Endothelial cell of umbilical vein (primary cell): ENCODE measurements at regions of chr2 and their contacts with region 1.

Region 1: GRCh38 chr2:102240640-102241370 is 54.0 kb downstream of the IL1RL2 start:
- DNase-seq: peak; percentile 94
- H3K4me3 ChIP-seq: no peak overlapping the region
- H3K27ac ChIP-seq: peak overlapping the region; percentile 36
- H3K4me1 ChIP-seq: peaks cover 12% of the 10 kb centered on the region
- H3K27me3 ChIP-seq: no peaks in the 10 kb centered on the region
- CTCF ChIP-seq: peak; percentile 97
- POLR2A ChIP-seq: no peak

Region 2: GRCh38 chr2:101733257-101733993 is 507.4 kb before region 1 on chr2:
- CTCF ChIA-PET with region 1: no interaction called
- POLR2A ChIA-PET with region 1: no interaction called
- dilution Hi-C with region 1: no loop called
- intact Hi-C with region 1: no loop called
- DNase-seq: no peak
- H3K4me3 ChIP-seq: no peak overlapping the region
- H3K27ac ChIP-seq: no peak overlapping the region
- H3K4me1 ChIP-seq: peaks cover 39% of the 10 kb centered on the region
- H3K27me3 ChIP-seq: no peaks in the 10 kb centered on the region
- CTCF ChIP-seq: no peak
- POLR2A ChIP-seq: no peak

Region 3: GRCh38 chr2:101883863-101884262 is 356.9 kb before region 1 on chr2:
- CTCF ChIA-PET with region 1: interaction called, 75 read pairs
- POLR2A ChIA-PET with region 1: no interaction called
- dilution Hi-C with region 1: no loop called
- intact Hi-C with region 1: loop called (anchors 5 kb)
- DNase-seq: peak; percentile 54
- H3K4me3 ChIP-seq: no peak overlapping the region
- H3K27ac ChIP-seq: no peak overlapping the region
- H3K4me1 ChIP-seq: peaks cover 22% of the 10 kb centered on the region
- H3K27me3 ChIP-seq: no peaks in the 10 kb centered on the region
- CTCF ChIP-seq: peak; percentile 33 to 53
- POLR2A ChIP-seq: no peak

Region 4: DNA sequence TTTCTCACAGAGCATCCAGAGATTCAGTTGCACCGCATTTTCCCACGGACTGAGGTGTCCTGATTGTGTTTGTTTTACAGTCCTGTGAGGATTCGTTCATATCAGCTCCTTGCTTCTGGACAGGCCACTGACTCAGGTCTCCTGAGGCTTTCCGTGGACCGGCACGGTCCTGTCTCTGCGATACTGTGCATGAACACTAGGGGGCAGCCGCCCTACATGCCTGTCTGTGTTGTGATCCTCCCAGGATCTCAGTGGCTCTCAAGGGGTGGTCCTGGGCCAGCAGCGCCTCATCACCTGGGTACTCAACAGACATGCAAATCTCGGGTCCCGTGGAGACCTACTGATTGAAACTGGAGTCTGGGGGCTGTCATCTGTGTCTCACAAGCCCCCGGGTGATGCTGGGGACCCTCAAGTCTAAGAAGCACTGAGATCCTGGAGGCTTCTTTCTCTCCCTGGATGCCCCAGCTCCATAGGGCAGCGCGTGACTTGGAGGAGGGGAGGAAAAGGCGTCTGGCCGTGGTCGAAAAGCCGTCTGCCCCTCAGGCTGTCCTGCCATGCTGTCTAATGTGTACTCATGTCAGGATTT is 220.1 kb before region 1 on chr2:
- CTCF ChIA-PET with region 1: interaction called, 222 read pairs
- POLR2A ChIA-PET with region 1: interaction called, 4 read pairs
- dilution Hi-C with region 1: no loop called
- intact Hi-C with region 1: loop called (anchors 1 kb)
- DNase-seq: peak; percentile 83
- H3K4me3 ChIP-seq: no peak overlapping the region
- H3K27ac ChIP-seq: no peak overlapping the region
- H3K4me1 ChIP-seq: no peaks in the 10 kb centered on the region
- H3K27me3 ChIP-seq: no peaks in the 10 kb centered on the region
- CTCF ChIP-seq: peak; percentile 95 to 97
- POLR2A ChIP-seq: no peak

Region 5: DNA sequence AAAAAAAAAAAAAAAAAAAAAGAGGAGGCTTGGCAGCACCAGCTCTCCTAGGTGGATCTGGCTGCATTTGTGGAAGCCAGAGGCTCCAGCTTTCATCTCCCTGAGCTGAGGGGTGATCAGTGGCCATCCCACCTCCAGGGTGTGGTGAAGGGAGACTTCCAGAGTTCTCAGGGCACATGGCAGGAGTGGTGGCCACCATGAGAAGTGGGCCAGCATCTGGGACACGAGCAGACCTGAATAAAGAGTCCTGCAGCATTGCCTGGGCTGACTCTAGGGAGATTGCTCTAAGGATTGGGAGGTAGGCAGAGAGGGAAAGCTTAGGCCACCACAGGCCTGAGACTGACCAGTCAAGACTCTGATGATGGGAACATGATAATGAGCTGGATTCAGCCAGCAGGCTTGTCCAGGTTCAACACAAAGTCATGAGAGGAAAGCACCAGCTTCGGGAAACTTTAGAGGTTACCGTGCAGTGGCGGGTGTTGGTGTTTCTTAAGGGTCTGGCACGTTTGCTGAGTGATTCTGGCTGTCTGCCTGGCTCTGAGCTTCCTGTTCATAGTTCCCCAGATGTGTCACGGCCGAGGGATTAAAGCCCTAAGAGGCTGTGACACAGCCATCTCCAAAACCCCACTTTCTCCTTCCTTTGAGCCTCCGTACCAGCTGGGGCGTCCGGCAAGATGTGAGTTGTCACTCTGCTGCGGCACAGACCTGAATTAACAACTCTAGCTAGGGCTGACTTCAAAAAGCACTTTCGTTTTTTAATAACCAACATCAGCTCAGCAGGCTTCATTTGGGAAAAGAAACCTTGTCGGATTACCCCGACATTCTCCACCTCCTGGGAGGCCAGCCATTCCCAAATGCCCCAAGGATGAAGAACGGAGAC is 136.6 kb before region 1 on chr2:
- CTCF ChIA-PET with region 1: interaction called, 20 read pairs
- POLR2A ChIA-PET with region 1: no interaction called
- dilution Hi-C with region 1: no loop called
- intact Hi-C with region 1: loop called (anchors 5 kb)
- DNase-seq: peak; percentile 79
- H3K4me3 ChIP-seq: peak overlapping the region; percentile 24 to 59 (median 32)
- H3K27ac ChIP-seq: peak overlapping the region; percentile 16
- H3K4me1 ChIP-seq: peaks cover 10% of the 10 kb centered on the region
- H3K27me3 ChIP-seq: no peaks in the 10 kb centered on the region
- CTCF ChIP-seq: no peak
- POLR2A ChIP-seq: no peak

Region 6: DNA sequence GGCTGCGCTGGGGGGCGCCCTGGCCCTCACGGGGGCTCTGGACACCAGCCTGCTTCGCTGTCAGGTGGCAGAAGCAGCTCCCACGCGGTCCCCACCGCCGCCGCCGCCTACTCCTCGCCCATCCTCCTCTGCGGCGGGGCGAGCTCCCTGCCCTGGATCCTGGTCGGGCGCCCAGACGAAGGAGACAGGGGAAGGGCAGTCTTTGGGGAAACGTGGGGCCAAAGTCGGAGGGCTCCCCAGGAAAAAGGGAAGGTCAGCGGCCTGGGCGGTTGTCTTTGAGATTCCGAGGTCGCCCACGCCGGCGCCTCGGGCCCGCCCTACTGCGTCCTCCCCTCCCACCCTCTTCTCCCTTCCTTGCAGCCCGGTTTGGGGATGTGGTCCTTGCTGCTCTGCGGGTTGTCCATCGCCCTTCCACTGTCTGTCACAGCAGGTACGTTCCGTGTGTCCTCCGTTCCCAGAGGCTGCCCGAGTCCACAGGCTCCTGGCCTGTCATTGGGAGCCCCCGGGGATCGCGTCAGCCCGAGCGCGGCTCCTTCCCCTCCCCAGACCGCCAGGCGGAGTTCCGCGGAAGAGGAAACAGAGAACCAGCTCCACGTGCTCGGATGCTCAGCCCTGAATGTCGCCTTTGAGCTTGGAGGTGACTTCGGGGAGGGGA is 53.2 kb before region 1 on chr2:
- CTCF ChIA-PET with region 1: interaction called, 41 read pairs
- POLR2A ChIA-PET with region 1: no interaction called
- dilution Hi-C with region 1: no loop called
- intact Hi-C with region 1: loop called (anchors 2 kb)
- DNase-seq: peak; percentile 40
- H3K4me3 ChIP-seq: peak overlapping the region; percentile 34 to 47 (median 38)
- H3K27ac ChIP-seq: no peak overlapping the region
- H3K4me1 ChIP-seq: peaks cover 18% of the 10 kb centered on the region
- H3K27me3 ChIP-seq: no peaks in the 10 kb centered on the region
- CTCF ChIP-seq: peak in 1 of 2 donors; percentile 43
- POLR2A ChIP-seq: no peak

Region 7: DNA sequence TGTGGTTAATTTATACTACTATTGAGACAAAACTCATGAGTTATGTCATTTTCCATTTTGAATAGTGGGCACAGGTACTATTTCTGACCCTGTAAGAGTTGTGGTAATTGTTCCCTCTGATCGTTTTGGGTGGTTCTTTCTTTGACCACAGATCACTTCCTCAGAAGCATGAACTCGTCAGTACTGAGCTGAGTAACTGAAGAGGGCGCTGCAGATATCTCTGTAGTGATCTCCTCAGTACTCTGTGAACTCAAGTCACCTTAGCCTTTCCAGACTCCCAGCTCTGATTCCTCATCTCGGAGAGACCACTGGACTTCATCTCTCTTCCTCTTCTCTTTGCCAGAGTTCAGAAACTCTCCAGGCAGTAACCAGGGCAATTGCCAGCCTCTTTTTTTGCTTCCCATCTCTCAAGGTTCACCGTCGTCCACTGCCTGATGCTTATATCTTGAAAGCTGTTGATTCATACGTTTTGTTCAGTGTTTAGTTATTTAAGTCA is 61.1 kb after region 1 on chr2:
- CTCF ChIA-PET with region 1: interaction called, 12 read pairs
- POLR2A ChIA-PET with region 1: no interaction called
- dilution Hi-C with region 1: no loop called
- intact Hi-C with region 1: no loop called
- DNase-seq: peak; percentile 51
- H3K4me3 ChIP-seq: no peak overlapping the region
- H3K27ac ChIP-seq: peak overlapping the region; percentile 2
- H3K4me1 ChIP-seq: peaks cover 38% of the 10 kb centered on the region
- H3K27me3 ChIP-seq: no peaks in the 10 kb centered on the region
- CTCF ChIP-seq: peak; percentile 40 to 41
- POLR2A ChIP-seq: no peak

Region 8: DNA sequence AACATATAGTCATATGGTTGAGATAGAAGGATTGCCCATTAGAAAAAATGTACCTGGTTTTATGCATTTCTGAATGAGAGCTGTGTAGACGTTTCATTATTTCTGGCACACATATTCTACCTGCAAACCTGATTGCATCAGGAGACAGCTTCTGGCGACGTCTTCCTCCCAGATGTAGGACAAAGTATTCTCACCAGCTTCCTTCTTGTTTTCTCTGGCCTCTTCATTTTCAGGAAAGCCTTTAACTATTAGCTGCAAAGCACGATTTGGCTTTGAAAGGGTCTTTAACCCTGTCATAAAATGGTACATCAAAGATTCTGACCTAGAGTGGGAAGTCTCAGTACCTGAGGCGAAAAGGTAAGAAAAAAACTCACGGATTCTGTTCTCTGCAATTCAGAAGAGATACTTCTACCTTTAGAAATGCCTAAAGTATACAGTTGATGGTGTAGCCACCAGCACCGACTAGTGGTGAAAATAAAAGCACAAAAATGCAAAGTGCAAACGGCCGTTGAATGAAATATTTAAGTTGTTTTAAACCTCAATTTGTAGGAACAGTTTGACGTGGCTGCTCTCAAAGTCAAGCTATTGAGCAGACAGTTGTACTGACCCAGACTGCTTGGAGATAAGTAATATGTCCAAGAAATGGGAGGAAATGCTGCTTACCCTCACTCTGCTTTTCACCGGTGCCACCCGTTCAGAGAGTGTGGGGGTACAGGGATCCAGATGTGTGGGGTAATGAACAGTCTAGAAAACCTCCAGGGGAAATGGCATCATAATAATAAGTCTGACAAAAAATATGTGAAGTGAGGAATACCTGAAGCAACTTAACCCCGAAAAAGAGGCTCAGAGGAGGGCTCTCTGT is 202.4 kb after region 1 on chr2:
- CTCF ChIA-PET with region 1: interaction called, 52 read pairs
- POLR2A ChIA-PET with region 1: no interaction called
- dilution Hi-C with region 1: no loop called
- intact Hi-C with region 1: loop called (anchors 1 kb)
- DNase-seq: peak; percentile 64
- H3K4me3 ChIP-seq: no peak overlapping the region
- H3K27ac ChIP-seq: no peak overlapping the region
- H3K4me1 ChIP-seq: no peaks in the 10 kb centered on the region
- H3K27me3 ChIP-seq: no peaks in the 10 kb centered on the region
- CTCF ChIP-seq: peak; percentile 56 to 62
- POLR2A ChIP-seq: no peak